Heart right ventricle (tissue), 16 donors: ENCODE measurements at regions of chr6 and their contacts with region 1.

Region 1: GRCh38 chr6:113989675-113990074 is 18.7 kb upstream of the HDAC2 start:
- DNase-seq: no peak
- ATAC-seq: no peak
- H3K4me3 ChIP-seq: no peak overlapping the region
- H3K27ac ChIP-seq: no peak overlapping the region
- H3K4me1 ChIP-seq: peaks cover 0 to 3% (median 0%) of the 10 kb centered on the region in 9 donors
- H3K27me3 ChIP-seq: no peaks in the 10 kb centered on the region
- CTCF ChIP-seq: no peak

Region 2: DNA sequence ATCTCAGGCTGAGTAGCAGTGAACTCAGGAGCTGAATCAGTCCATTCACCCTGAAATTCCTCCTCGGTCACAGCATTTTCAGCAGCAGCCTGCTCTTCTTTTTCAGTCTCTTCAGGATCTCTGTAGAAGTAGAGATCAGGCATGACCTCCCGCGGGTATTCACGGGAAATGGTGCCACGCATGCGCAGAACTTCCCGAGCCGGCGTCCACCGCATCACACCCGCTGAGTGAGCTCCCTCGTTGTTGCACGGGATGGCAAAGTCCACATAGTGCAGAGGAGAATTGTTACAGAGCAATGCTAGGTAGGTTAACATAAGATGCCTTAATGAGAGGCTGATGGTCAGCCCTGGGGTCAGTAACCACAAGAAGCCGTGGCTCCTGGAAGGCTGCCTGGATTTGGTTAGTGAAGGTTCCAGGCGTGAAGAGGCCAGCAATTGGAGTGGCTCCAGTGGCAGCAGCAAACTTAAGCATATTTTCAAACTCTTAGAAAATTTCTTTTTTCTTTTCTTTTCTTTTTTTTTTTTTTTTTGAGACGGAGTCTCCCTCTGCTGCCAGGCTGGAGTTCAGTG is 94.7 kb after region 1 on chr6:
- intact Hi-C with region 1: loop called in 1 of 10 experiments (anchors 1 kb)
- DNase-seq: no peak
- ATAC-seq: no peak
- H3K4me3 ChIP-seq: no peak overlapping the region
- H3K27ac ChIP-seq: no peak overlapping the region
- H3K4me1 ChIP-seq: no peaks in the 10 kb centered on the region
- H3K27me3 ChIP-seq: peaks cover 0 to 1% (median 0%) of the 10 kb centered on the region in 7 donors
- CTCF ChIP-seq: no peak